Activated naive CD4-positive, alpha-beta T cell treated with anti-CD3 and anti-CD28 coated beads, Interleukin-2, amount 10 ng/mL, durations not matched to agents 7 days and 5 days (primary cell): ENCODE measurements at regions of chr1 and their contacts with region 1.

Region 1: DNA sequence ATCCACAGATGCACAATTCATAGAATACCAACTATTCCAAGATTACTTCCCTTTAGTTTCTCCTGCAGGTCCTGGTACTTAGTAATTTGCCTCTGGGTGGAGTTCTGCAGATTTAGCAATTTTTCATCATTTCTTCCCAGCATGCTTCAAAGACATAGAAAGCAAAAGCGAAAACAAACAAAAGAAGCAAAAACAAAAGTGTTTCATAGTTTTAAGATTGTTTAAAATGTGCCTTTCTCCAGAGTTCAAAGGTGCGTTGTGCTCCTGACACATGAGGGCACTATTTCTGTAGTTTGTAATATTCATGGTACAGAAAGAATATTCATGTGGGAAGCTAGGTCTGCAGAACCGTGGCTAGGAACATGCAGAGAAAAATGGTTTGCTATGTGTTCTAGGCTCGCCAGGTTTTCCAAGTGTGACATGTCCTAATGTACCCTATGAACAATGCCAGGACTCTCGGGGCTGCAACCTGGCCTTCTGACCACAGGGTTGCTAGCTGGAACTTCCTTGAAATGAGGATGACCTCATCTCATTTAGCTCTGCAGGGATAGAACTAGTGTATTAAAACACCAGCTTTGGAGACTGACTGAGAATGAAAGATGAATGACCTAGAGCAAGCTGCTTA is 30.0 kb upstream of the RCSD1 start:
- DNase-seq: peak; percentile 61
- H3K4me3 Mint-ChIP-seq: peak overlapping the region; percentile 14
- H3K27ac Mint-ChIP-seq: peak overlapping the region; percentile 78
- H3K4me1 Mint-ChIP-seq: peaks cover 47% of the 10 kb centered on the region
- H3K27me3 Mint-ChIP-seq: peaks cover 10% of the 10 kb centered on the region

Region 2: DNA sequence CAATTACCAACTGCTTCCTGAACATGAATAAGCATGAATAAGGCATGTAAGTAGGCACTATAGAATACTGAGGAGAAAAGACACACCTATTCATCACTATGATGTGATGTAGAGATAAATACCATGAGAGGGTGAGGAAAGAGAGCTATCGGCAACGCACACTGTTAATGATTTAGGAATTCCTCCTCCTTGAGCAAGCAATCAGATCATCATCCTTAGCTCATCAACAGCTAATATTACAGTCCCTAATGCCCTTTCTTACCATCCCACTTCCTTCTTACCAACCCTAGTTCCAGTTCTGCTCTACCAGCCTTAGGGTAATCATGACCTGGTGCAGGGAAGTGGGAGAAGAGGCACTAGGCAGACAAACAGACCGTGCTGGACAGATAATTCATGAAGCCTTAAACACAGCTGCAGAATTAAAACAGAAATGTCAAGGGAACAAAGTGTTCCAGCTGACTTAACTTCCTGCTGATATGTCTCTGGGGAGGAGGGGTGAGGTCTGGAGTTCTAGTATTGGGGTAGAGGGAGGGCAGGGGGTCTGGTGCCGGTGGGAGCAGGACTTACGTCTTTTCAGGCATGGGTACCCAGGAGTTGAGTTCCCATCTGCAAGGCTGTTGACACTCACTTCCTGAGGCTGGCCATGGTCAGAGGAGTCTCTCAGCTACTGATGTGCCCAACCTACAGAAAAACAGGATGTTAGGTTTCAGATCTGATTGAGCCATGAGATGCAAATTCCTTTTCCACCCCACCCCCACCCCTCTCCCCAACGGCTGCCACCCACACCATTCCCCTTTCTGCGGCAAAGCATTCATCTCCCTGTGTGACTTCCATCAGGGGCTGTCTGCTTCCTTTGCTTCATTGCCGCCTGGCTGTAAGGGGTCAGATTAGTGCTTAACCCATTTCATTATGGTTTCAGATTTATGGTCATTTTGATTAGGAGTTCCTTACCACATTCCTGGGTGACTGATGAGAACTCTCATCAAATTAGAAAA is 17.4 kb after region 1 on chr1:
- CTCF ChIA-PET with region 1: interaction called, 33 read pairs
- DNase-seq: peak; percentile 46
- H3K4me3 Mint-ChIP-seq: peak overlapping the region; percentile 75
- H3K27ac Mint-ChIP-seq: peak overlapping the region; percentile 95
- H3K4me1 Mint-ChIP-seq: peaks cover 71% of the 10 kb centered on the region
- H3K27me3 Mint-ChIP-seq: no peaks in the 10 kb centered on the region

Region 3: DNA sequence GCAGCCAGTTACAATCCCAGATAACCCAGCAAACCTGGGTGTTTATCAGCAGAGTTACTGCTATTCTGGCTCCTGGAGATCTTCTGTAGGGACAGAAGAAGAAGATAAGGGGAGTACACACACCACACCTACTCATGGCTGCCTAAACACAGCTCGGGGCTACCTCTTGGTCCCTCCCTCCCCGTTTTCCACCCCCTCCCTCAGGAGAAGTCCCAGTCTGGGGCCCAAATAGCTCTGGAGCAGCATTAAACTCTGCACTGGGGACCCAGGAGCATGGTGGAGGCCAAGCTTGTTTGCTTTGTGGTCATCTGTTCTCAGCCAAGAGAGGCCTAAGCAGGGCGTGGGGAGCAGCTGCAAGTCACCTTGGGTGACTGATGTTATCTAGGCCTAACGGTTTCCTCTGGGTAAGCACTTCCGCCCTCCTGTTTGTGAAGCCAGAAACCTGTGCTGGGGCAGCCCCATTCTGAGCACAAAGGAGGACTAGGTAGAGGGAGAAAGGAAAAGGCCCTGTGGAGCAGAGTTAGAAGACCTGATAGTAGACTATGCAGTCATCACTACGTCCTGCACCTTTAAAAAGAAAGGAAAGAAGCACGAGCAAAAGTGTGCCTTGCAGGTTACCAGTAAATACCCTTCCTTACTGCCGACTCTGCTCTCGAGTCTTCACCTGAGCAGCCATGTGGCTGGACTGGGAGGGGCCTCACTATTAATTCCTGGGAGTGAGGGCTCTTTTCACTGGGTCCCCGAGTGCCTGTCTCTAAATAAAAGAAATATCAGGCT is 28.0 kb after region 1 on chr1:
- CTCF ChIA-PET with region 1: interaction called, 236 read pairs
- DNase-seq: peak; percentile 89
- H3K4me3 Mint-ChIP-seq: peak overlapping the region; percentile 95
- H3K27ac Mint-ChIP-seq: peak overlapping the region; percentile 98
- H3K4me1 Mint-ChIP-seq: peaks cover 66% of the 10 kb centered on the region
- H3K27me3 Mint-ChIP-seq: no peaks in the 10 kb centered on the region

Region 4: DNA sequence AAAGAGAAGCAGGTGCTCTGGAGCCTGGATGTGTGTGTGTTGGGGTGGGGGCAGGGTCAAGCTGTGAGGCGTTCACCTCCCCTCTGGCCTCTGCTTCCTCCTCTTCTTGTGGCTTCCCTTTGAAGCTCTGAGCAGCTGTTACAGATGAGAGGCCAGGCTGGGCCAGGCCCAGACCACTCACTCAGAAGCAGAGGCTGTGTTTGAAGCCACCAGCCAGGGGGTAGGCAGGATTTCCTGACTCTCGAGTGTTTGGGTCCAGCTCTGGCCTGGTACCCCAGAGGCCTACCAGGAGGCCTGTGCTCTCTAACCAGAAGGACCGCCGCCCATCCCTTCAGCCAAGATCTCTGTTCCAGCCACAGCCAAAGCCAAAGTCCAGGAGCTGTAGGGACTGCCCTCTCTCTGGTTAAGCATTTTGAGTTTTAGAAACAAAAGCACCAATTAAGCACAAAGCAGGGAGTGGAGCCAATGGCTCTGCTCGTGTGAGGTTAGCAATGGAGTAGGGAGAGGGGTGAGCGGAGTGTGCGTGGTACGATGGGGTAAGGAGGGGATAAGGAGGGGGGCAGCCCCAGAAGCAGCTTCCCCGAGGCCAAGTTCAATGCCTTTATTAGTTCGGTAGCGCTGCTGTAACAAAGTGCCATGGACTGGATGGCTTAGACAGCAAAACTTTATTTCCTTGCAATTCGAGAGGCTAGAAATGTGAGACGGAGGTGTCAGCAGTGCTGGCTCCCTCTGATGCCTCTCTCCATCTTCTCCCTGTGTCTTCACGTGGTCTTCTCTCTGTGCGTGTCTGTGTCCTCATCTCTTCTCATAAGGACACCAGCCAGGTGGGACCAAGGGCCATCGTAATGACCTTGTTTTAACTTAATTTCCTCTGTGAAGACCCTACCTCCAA is 50.4 kb after region 1 on chr1:
- CTCF ChIA-PET with region 1: interaction called, 10 read pairs
- DNase-seq: peak; percentile 38
- H3K4me3 Mint-ChIP-seq: no peak overlapping the region
- H3K27ac Mint-ChIP-seq: peak overlapping the region; percentile 77
- H3K4me1 Mint-ChIP-seq: peaks cover 73% of the 10 kb centered on the region
- H3K27me3 Mint-ChIP-seq: no peaks in the 10 kb centered on the region

Region 5: GRCh38 chr1:167676205-167676915 is 76.3 kb after region 1 on chr1:
- CTCF ChIA-PET with region 1: interaction called, 17 read pairs
- DNase-seq: no peak
- H3K4me3 Mint-ChIP-seq: no peak overlapping the region
- H3K27ac Mint-ChIP-seq: peak overlapping the region; percentile 65
- H3K4me1 Mint-ChIP-seq: peaks cover 39% of the 10 kb centered on the region
- H3K27me3 Mint-ChIP-seq: no peaks in the 10 kb centered on the region

Region 6: GRCh38 chr1:167681451-167682098 is 81.5 kb after region 1 on chr1:
- CTCF ChIA-PET with region 1: interaction called, 100 read pairs
- DNase-seq: no peak
- H3K4me3 Mint-ChIP-seq: no peak overlapping the region
- H3K27ac Mint-ChIP-seq: peak overlapping the region; percentile 46
- H3K4me1 Mint-ChIP-seq: peaks cover 9% of the 10 kb centered on the region
- H3K27me3 Mint-ChIP-seq: no peaks in the 10 kb centered on the region

Region 7: DNA sequence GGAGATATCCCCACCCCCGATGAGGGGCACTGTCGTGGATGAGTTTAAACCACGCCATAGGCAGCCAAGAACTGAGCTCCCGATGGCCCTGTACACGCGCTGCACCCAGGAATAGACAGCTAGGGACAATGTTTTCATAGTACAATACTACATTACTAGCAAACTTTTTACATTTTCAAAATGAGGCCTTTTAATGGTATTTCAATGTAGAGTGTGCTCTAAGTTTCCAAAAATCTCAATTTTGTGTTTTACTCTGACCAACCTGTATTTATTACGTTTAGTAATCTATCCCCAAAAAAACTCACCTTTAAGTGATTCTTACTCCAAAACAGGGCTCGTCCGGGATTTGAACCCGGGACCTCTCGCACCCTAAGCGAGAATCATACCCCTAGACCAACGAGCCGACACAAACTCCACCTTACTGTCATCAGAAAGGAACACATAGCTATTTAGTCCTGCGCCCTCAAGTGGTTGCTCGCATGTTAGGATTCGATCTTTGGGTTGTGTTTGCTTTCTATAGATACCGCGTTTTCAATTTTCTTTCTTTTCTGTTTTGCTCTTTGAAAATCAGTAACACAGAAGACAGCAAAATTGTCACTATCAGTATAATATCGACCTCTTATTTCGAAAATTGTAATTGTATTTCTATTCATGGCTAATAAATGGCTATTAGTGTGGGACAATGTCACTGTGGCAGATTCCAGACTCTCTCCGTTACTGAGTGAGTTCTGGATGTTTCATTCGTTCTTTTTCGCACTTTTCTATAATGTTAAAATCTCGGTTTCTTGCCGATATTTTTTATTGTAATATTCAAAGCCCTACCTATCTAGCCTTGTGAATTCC is 115.3 kb after region 1 on chr1:
- CTCF ChIA-PET with region 1: interaction called, 16 read pairs
- DNase-seq: peak; percentile 94
- H3K4me3 Mint-ChIP-seq: peak overlapping the region; percentile 79
- H3K27ac Mint-ChIP-seq: peak overlapping the region; percentile 96
- H3K4me1 Mint-ChIP-seq: peaks cover 65% of the 10 kb centered on the region
- H3K27me3 Mint-ChIP-seq: peaks cover 25% of the 10 kb centered on the region

Region 8: DNA sequence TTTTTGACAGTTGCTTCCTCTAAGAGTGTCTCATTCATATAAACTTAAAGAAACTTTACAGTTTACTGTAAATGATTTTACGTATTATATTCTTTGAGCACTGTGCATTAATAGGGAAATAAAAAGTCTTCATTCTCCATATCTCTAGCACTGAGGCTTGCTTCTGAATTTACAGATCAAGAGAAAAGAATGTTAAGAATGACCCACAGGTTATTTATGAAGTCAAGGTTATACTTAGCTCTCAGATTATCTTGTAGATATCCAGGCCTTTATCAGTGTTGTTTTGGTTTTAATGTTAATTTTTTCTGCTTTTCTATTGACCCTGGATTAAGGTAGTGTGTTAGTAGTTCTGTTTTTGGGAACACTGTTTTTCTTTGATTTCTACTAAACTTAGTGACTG is 445.2 kb after region 1 on chr1:
- CTCF ChIA-PET with region 1: no interaction called
- DNase-seq: no peak
- H3K4me3 Mint-ChIP-seq: no peak overlapping the region
- H3K27ac Mint-ChIP-seq: no peak overlapping the region
- H3K4me1 Mint-ChIP-seq: no peaks in the 10 kb centered on the region
- H3K27me3 Mint-ChIP-seq: no peaks in the 10 kb centered on the region